Adrenal gland (tissue), 19 donors: ENCODE measurements at regions of chr5 and their contacts with region 1.

Region 1: GRCh38 chr5:131252824-131253171 is 11.1 kb upstream of the CDC42SE2 start:
- DNase-seq: peak; percentile 41 to 77 (median 55)
- H3K4me3 ChIP-seq: no peak overlapping the region
- H3K27ac ChIP-seq: peak overlapping the region in 4 of 5 donors; percentile 16 to 72 (median 44)
- H3K4me1 ChIP-seq: no peaks in the 10 kb centered on the region
- H3K27me3 ChIP-seq: no peaks in the 10 kb centered on the region
- CTCF ChIP-seq: no peak
- POLR2A ChIP-seq: peak in 1 of 2 donors; percentile 22

Region 2: GRCh38 chr5:130978475-130978874 is 274.3 kb before region 1 on chr5:
- intact Hi-C with region 1: no loop called
- DNase-seq: no peak
- H3K4me3 ChIP-seq: no peak overlapping the region
- H3K27ac ChIP-seq: no peak overlapping the region
- H3K4me1 ChIP-seq: no peaks in the 10 kb centered on the region
- H3K27me3 ChIP-seq: no peaks in the 10 kb centered on the region
- CTCF ChIP-seq: no peak
- POLR2A ChIP-seq: no peak

Region 3: GRCh38 chr5:131165119-131165727 is 87.6 kb before region 1 on chr5 and contains the start of gene HINT1:
- intact Hi-C with region 1: loop called (anchors 10 kb)
- DNase-seq: peak; percentile 89 to 94 (median 93)
- H3K4me3 ChIP-seq: peak within 1 kb of the TSS; percentile 66 to 86 (median 74)
- H3K27ac ChIP-seq: peak within 1 kb of the TSS; percentile 85 to 96 (median 94)
- H3K4me1 ChIP-seq: peaks cover 9 to 19% of the 10 kb centered on the region in 2 donors
- H3K27me3 ChIP-seq: no peaks in the 10 kb centered on the region
- CTCF ChIP-seq: no peak
- POLR2A ChIP-seq: peak; percentile 45 to 69
- total RNA-seq, gene HINT1: 94.2 to 269 (median 185) TPM

Region 4: GRCh38 chr5:131328536-131329285 is 75.9 kb after region 1 on chr5:
- intact Hi-C with region 1: no loop called
- DNase-seq: no peak
- H3K4me3 ChIP-seq: no peak overlapping the region
- H3K27ac ChIP-seq: no peak overlapping the region
- H3K4me1 ChIP-seq: peaks cover 0 to 16% of the 10 kb centered on the region in 2 donors
- H3K27me3 ChIP-seq: no peaks in the 10 kb centered on the region
- CTCF ChIP-seq: no peak
- POLR2A ChIP-seq: no peak

Region 5: GRCh38 chr5:131610198-131611063 is 357.6 kb after region 1 on chr5:
- intact Hi-C with region 1: no loop called
- DNase-seq: no peak
- H3K4me3 ChIP-seq: no peak overlapping the region
- H3K27ac ChIP-seq: no peak overlapping the region
- H3K4me1 ChIP-seq: peaks cover 11 to 12% of the 10 kb centered on the region in 2 donors
- H3K27me3 ChIP-seq: no peaks in the 10 kb centered on the region
- CTCF ChIP-seq: no peak
- POLR2A ChIP-seq: no peak